ENCODE measurements at regions of chr17 and their contacts with region 1.

Region 1: DNA sequence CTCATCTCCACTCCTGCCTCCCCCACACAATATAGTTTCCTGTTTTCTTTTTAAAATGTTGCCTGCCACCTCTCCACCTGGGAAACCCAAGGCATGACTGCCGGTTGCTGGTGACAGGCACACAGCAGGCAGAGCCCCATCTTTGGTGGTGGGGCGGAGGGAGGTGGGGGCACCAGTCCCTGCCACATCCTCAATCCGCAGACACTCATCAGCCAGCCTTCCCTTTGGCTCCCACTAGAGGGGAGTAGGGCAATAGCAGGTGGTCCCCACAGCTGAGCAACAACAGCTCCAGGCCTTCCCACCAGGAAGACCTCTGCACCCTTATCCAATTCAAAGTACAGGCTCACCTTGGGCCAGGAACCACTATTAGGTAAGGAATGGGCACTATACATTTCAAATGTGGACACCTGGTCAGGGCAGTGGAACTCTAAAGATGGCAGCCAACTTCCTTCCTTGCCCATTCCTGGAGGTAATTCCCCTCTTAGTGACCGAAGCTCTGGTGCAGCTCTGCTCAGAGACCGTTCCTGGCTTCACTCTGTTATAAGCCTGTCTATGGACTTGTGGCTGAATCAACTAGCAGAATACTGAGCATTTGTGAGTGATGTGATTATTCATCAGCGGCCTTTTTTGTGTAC is 13.9 kb downstream of the RECQL5 start:
- DNase-seq: peak; percentile 62
- H3K4me3 ChIP-seq: no peak overlapping the region
- H3K27ac ChIP-seq: no peak overlapping the region
- H3K4me1 ChIP-seq: no peaks in the 10 kb centered on the region
- H3K27me3 ChIP-seq: no peaks in the 10 kb centered on the region
- CTCF ChIP-seq: peak; percentile 84

Region 2: GRCh38 chr17:75738218-75738802 is 85.3 kb after region 1 on chr17:
- CTCF ChIA-PET with region 1: interaction called, 10 read pairs
- POLR2A ChIA-PET with region 1: interaction called, 6 read pairs
- intact Hi-C with region 1: no loop called
- DNase-seq: no peak
- H3K4me3 ChIP-seq: no peak overlapping the region
- H3K27ac ChIP-seq: no peak overlapping the region
- H3K4me1 ChIP-seq: no peaks in the 10 kb centered on the region
- H3K27me3 ChIP-seq: no peaks in the 10 kb centered on the region
- CTCF ChIP-seq: no peak

Measured in A673 (cell line).